ENCODE measurements at regions of chr2 and their contacts with region 1.

Region 1: GRCh38 chr2:53786705-53787612 is at the starts of genes ASB3 and ERLEC1:
- DNase-seq: peak; percentile 91
- ATAC-seq: peak; percentile 95
- H3K4me3 ChIP-seq: peak within 1 kb of the TSS; percentile 72 to 98 (median 95)
- H3K27ac ChIP-seq: peak within 1 kb of the TSS; percentile 83
- H3K4me1 ChIP-seq: peaks cover 48% of the 10 kb centered on the region
- H3K27me3 ChIP-seq: peaks cover 0 to 6% of the 10 kb centered on the region in 2 experiments; a peak in 1 of 5 replicates
- CTCF ChIP-seq: peak; percentile 19
- EP300 ChIP-seq: peak; percentile 16 to 38; a peak in 1 of 4 replicates
- POLR2A ChIP-seq: peak; percentile 95 to 97
- RAD21 ChIP-seq: peak; percentile 49
- total RNA-seq, gene ASB3: 40.1 and 48.2 TPM in 2 replicates
- total RNA-seq, gene ERLEC1: 66.7 and 88.4 TPM in 2 replicates

Region 2: GRCh38 chr2:53740170-53740569 is 46.8 kb before region 1 on chr2:
- CTCF ChIA-PET with region 1: no interaction called
- POLR2A ChIA-PET with region 1: no interaction called
- in situ Hi-C with region 1: no loop called
- intact Hi-C with region 1: loop called (anchors 1 kb)
- DNase-seq: peak; percentile 40
- ATAC-seq: no peak
- H3K4me3 ChIP-seq: no peak overlapping the region
- H3K27ac ChIP-seq: no peak overlapping the region
- H3K4me1 ChIP-seq: peaks cover 8% of the 10 kb centered on the region; the same call in 1 of the 2 replicates
- H3K27me3 ChIP-seq: no peaks in the 10 kb centered on the region
- CTCF ChIP-seq: peak; percentile 46
- EP300 ChIP-seq: no peak
- POLR2A ChIP-seq: no peak
- RAD21 ChIP-seq: no peak

Region 3: DNA sequence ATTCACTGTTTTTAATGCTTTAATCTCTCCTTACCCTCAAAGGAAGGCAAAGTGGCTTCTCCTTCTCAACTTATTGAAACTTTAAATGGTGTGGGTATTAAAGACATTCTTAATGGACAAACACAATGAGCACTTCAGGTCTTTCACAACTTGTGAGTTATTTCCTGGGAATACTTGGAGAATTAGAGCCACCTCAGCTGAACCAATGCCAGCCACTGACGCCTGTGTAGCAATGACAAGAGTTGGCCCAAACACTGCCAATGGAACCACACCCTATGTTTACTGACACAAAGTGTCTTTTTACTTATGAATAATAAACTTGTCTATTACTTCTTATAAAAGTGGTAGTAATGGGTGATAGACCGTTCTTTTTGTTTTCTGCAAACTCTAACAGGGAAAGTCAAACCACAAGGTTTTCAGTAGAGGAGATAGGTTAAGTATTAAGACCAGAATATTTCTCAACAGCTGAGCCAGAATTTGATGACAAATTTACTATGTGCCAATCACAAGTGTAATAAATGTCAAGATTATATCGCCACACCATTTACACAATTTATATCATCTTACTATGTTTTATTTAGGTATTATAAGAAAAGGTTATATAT is 31.8 kb before region 1 on chr2:
- CTCF ChIA-PET with region 1: no interaction called
- POLR2A ChIA-PET with region 1: no interaction called
- in situ Hi-C with region 1: no loop called
- intact Hi-C with region 1: no loop called
- DNase-seq: no peak
- ATAC-seq: no peak
- H3K4me3 ChIP-seq: no peak overlapping the region
- H3K27ac ChIP-seq: no peak overlapping the region
- H3K4me1 ChIP-seq: no peaks in the 10 kb centered on the region
- H3K27me3 ChIP-seq: no peaks in the 10 kb centered on the region
- CTCF ChIP-seq: no peak
- EP300 ChIP-seq: no peak
- POLR2A ChIP-seq: no peak
- RAD21 ChIP-seq: no peak

Region 4: DNA sequence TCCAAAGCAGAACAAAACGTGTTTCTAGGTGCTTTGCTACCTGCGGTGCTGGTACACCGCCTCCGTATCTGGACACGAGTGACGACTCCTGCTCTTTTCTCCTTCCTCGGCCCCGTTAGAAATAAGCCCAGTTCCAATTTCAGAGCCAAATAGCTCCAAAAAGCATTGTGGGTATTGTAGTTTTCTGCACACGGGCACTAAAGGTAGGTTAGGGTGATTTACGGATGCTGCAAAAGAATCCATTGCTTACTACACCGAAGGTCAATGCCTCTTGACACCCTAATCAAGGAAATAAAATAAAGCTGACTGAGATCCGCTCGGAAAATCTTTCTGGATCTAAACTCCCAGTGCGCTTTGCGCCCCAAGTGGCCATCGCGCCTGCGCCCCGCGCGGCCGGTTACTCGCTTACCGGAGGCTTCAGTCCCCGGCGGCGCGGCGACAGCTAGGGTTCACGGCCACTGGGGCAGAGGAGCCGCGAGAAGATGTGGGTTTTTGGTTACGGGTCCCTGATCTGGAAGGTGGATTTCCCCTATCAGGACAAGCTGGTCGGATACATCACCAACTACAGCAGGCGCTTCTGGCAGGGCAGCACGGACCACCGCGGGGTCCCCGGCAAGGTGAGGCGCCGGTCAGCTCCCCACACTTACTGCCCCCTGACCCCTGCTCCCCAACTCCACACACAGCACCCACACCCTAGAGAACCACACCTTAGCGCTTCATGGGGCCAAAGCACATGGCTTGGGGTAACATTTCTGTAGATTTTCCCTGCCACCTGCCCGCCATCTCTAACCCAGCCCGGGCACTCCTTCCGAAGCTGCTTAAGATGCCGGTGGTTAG is 19.3 kb before region 1 on chr2 and contains the start of gene CHAC2:
- CTCF ChIA-PET with region 1: no interaction called
- POLR2A ChIA-PET with region 1: interaction called, 53 read pairs
- in situ Hi-C with region 1: no loop called
- intact Hi-C with region 1: loop called (anchors 2 kb)
- DNase-seq: peak; percentile 81
- ATAC-seq: peak; percentile 98
- H3K4me3 ChIP-seq: peak within 1 kb of the TSS; percentile 80 to 90 (median 82)
- H3K27ac ChIP-seq: peak within 1 kb of the TSS; percentile 73
- H3K4me1 ChIP-seq: peaks cover 36% of the 10 kb centered on the region
- H3K27me3 ChIP-seq: no peaks in the 10 kb centered on the region; a peak in 1 of 5 replicates
- CTCF ChIP-seq: peak; percentile 46; the same call in 1 of the 2 replicates
- EP300 ChIP-seq: no peak
- POLR2A ChIP-seq: peak; percentile 57 to 86
- RAD21 ChIP-seq: no peak; the same call in 1 of the 2 replicates
- total RNA-seq, gene CHAC2: 10.7 and 15.5 TPM in 2 replicates

Region 5: DNA sequence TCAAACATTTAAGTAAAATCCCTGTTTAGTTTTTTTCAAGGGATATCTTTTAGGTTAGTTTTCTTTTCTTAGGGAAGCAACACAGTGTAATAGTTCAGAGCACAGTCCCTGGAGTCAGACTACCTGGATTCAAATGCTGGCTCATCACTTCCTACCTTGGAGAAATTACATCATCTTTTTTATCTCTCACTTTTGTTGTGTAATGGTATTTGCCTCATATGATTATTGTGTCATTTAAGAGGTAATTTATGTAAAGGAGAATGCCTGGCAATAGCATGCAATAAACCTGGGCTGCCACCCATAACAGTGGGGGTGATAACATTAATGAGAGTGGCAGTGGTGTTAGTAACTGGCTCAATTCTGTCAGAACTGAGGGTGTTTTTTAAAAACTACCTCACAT is 26.2 kb after region 1 on chr2:
- CTCF ChIA-PET with region 1: no interaction called
- POLR2A ChIA-PET with region 1: no interaction called
- in situ Hi-C with region 1: no loop called
- intact Hi-C with region 1: no loop called
- DNase-seq: no peak
- ATAC-seq: no peak
- H3K4me3 ChIP-seq: no peak overlapping the region
- H3K27ac ChIP-seq: no peak overlapping the region
- H3K4me1 ChIP-seq: 0 out of 2 replicates have a peak, but pooled peaks cover 6% of the 10 kb centered on the region
- H3K27me3 ChIP-seq: no peaks in the 10 kb centered on the region
- CTCF ChIP-seq: no peak
- EP300 ChIP-seq: no peak
- POLR2A ChIP-seq: no peak
- RAD21 ChIP-seq: no peak

Region 6: GRCh38 chr2:53826587-53827397 is 39.8 kb after region 1 on chr2:
- CTCF ChIA-PET with region 1: no interaction called
- POLR2A ChIA-PET with region 1: interaction called, 5 read pairs
- in situ Hi-C with region 1: no loop called
- intact Hi-C with region 1: loop called (anchors 2 kb)
- DNase-seq: peak; percentile 100
- ATAC-seq: peak; percentile 95
- H3K4me3 ChIP-seq: peak overlapping the region in 2 of 3 experiments; percentile 20 to 44; a peak in 3 of 6 replicates
- H3K27ac ChIP-seq: peak overlapping the region; percentile 93
- H3K4me1 ChIP-seq: peaks cover 53% of the 10 kb centered on the region
- H3K27me3 ChIP-seq: no peaks in the 10 kb centered on the region
- CTCF ChIP-seq: no peak
- EP300 ChIP-seq: peak; percentile 97 to 99
- POLR2A ChIP-seq: peak; percentile 23 to 52; a peak in 3 of 4 replicates
- RAD21 ChIP-seq: no peak; the same call in 1 of the 2 replicates

Region 7: DNA sequence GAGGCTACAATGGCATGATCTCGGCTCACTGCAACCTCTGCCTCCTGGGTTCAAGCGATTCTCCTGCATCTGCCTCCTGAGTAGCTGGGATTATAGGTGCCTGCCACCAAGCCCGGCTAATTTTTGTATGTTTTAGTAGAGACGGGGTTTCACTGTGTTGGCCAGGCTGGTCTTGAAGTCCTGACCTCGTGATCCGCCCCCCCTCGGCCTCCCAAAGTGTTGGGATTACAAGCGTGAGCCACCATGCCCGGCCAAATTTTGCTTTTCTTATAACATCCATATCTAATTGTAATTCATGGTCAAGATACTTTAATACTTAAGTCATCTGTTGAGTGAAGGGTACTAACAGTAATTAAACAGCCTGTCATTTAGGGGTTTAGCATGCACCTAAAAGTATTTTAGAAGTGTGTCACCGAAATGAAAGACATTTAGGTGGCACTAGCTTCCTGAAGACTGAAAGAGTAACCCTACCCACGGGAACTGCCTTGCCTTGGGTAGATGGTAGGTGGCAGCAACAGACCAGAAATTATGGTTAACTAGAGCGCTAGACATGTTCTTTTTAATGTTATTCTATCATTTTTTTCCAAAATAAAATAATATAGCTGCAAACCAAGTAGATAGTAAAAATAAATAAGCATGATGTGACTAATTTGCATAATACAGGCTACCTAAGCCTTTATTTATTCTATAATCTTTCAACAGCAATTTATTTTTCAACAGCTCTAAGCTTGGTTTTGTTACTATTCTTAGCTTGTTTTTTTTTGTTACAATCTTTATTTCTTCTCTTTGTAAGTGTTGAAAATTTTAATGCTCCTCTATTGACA is 319.9 kb after region 1 on chr2:
- CTCF ChIA-PET with region 1: no interaction called
- POLR2A ChIA-PET with region 1: no interaction called
- in situ Hi-C with region 1: no loop called
- intact Hi-C with region 1: no loop called
- DNase-seq: peak; percentile 73
- ATAC-seq: peak; percentile 85
- H3K4me3 ChIP-seq: peak overlapping the region in 1 of 3 experiments; percentile 32; a peak in 2 of 6 replicates
- H3K27ac ChIP-seq: no peak overlapping the region
- H3K4me1 ChIP-seq: peaks cover 32% of the 10 kb centered on the region
- H3K27me3 ChIP-seq: no peaks in the 10 kb centered on the region
- CTCF ChIP-seq: peak; percentile 85
- EP300 ChIP-seq: no peak
- POLR2A ChIP-seq: no peak
- RAD21 ChIP-seq: peak; percentile 78